ENCODE measurements at regions of chrX and their contacts with region 1.

Region 1: GRCh38 chrX:106999002-106999975 is 723 bp downstream of the MORC4 start:
- DNase-seq: peak; percentile 58 to 82
- ATAC-seq: peak; percentile 83
- H3K4me3 ChIP-seq: peak overlapping the region; percentile 79 to 92
- H3K27ac ChIP-seq: peak overlapping the region in 1 of 2 donors; percentile 36
- H3K4me1 ChIP-seq: no peaks in the 10 kb centered on the region
- H3K27me3 ChIP-seq: no peaks in the 10 kb centered on the region

Region 2: GRCh38 chrX:107627838-107628661 is 628.8 kb after region 1 on chrX and contains the start of gene PRPS1:
- intact Hi-C with region 1: loop called in 1 of 2 experiments (anchors 5 kb)
- DNase-seq: peak; percentile 94
- ATAC-seq: peak; percentile 98
- H3K4me3 ChIP-seq: peak within 1 kb of the TSS; percentile 40 to 87
- H3K27ac ChIP-seq: peak within 1 kb of the TSS in 1 of 2 donors; percentile 79
- H3K4me1 ChIP-seq: no peaks in the 10 kb centered on the region
- H3K27me3 ChIP-seq: no peaks in the 10 kb centered on the region
- total RNA-seq, gene PRPS1: 23.8 to 29.2 TPM

Region 3: GRCh38 chrX:107894038-107894437 is 894.7 kb after region 1 on chrX:
- intact Hi-C with region 1: loop called in 1 of 2 experiments (anchors 10 kb)
- DNase-seq: no peak
- ATAC-seq: peak; percentile 60
- H3K4me3 ChIP-seq: no peak overlapping the region
- H3K27ac ChIP-seq: no peak overlapping the region
- H3K4me1 ChIP-seq: no peaks in the 10 kb centered on the region
- H3K27me3 ChIP-seq: no peaks in the 10 kb centered on the region

Measured in aorta (tissue), 5 donors.